OCI-LY7 (cell line): ENCODE measurements at regions of chr7 and their contacts with region 1.

Region 1: GRCh38 chr7:44999245-45000095 is 531 bp upstream of the CCM2 start:
- DNase-seq: peak; percentile 100
- H3K4me3 ChIP-seq: peak overlapping the region; percentile 86
- H3K27ac ChIP-seq: peak overlapping the region; percentile 93
- H3K4me1 ChIP-seq: peaks cover 78% of the 10 kb centered on the region
- CTCF ChIP-seq: no peak

Region 2: GRCh38 chr7:44581879-44582603 is 417.4 kb before region 1 on chr7 and contains the start of gene TMED4:
- CTCF ChIA-PET with region 1: no interaction called
- POLR2A ChIA-PET with region 1: no interaction called
- intact Hi-C with region 1: loop called (anchors 5 kb)
- DNase-seq: peak; percentile 99
- H3K4me3 ChIP-seq: peak within 1 kb of the TSS; percentile 84
- H3K27ac ChIP-seq: peak within 1 kb of the TSS; percentile 68
- H3K4me1 ChIP-seq: peaks cover 19% of the 10 kb centered on the region
- CTCF ChIP-seq: no peak
- total RNA-seq, gene TMED4: 64.9 and 80.5 TPM in 2 replicates

Region 3: DNA sequence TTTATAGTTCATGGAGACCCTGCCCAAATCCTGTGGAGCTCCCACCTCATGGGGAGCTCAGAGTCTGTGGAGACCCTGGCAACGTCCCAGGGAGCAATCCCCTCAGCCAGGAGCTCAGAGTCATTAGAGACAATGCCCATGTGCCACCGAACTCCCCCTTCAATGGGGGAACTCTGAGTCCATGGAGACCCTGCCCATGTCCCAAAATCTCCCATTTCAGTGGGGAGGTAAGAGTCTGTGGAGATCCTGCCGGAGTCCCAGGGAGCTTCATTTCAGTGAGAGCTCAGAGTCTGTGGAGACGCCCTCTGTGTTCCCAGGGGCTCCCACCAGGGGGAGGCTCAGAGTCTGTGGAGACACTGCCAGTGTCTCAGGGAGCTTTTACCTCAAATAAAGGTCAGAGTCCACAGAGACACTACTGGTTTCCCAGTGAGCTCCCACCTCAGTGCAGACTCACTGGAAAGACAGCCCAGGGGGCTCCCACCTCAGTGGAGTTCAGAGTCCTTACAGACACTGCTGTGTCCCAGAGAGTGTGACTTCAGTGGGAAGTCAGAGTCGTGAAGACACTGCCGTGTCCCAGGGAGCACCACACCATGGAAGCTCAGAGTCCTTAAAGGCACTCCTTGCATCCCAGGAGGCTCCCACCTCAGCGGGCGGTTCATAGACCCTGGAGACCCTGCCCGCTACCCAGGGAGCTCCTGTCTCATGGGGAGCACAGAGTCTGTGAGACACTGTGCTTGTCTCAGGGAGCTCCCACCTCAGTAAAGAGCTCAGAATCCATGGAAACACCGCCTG is 25.7 kb before region 1 on chr7:
- CTCF ChIA-PET with region 1: interaction called, 17 read pairs
- POLR2A ChIA-PET with region 1: interaction called, 206 read pairs
- intact Hi-C with region 1: loop called (anchors 1 kb)
- DNase-seq: peak; percentile 55
- H3K4me3 ChIP-seq: no peak overlapping the region
- H3K27ac ChIP-seq: no peak overlapping the region
- H3K4me1 ChIP-seq: peaks cover 32% of the 10 kb centered on the region
- CTCF ChIP-seq: peak; percentile 79

Region 4: GRCh38 chr7:45026984-45027773 is 27.7 kb after region 1 on chr7:
- CTCF ChIA-PET with region 1: interaction called, 4 read pairs
- POLR2A ChIA-PET with region 1: interaction called, 29 read pairs
- intact Hi-C with region 1: loop called (anchors 1 kb)
- DNase-seq: peak; percentile 79
- H3K4me3 ChIP-seq: peak overlapping the region; percentile 57
- H3K27ac ChIP-seq: peak overlapping the region; percentile 94
- H3K4me1 ChIP-seq: peaks cover 54% of the 10 kb centered on the region
- CTCF ChIP-seq: no peak